Activated naive CD4-positive, alpha-beta T cell treated with anti-CD3 and anti-CD28 coated beads for 36 hours (primary cell): ENCODE measurements at regions of chr2 and their contacts with region 1.

Region 1: GRCh38 chr2:159185401-159186130 is 100.9 kb downstream of the WDSUB1 start:
- DNase-seq: peak; percentile 38
- H3K4me3 Mint-ChIP-seq: no peak overlapping the region
- H3K27ac Mint-ChIP-seq: no peak overlapping the region
- H3K4me1 Mint-ChIP-seq: no peaks in the 10 kb centered on the region
- H3K27me3 Mint-ChIP-seq: no peaks in the 10 kb centered on the region

Region 2: GRCh38 chr2:159035790-159036411 is 149.7 kb before region 1 on chr2:
- CTCF ChIA-PET with region 1: no interaction called
- intact Hi-C with region 1: loop called (anchors 1 kb)
- DNase-seq: peak; percentile 47
- H3K4me3 Mint-ChIP-seq: no peak overlapping the region
- H3K27ac Mint-ChIP-seq: no peak overlapping the region
- H3K4me1 Mint-ChIP-seq: no peaks in the 10 kb centered on the region
- H3K27me3 Mint-ChIP-seq: no peaks in the 10 kb centered on the region

Region 3: GRCh38 chr2:159124441-159124911 is 61.1 kb before region 1 on chr2:
- CTCF ChIA-PET with region 1: interaction called, 4 read pairs
- intact Hi-C with region 1: loop called (anchors 2 kb)
- DNase-seq: peak; percentile 60
- H3K4me3 Mint-ChIP-seq: no peak overlapping the region
- H3K27ac Mint-ChIP-seq: peak overlapping the region; percentile 82
- H3K4me1 Mint-ChIP-seq: peaks cover 20% of the 10 kb centered on the region
- H3K27me3 Mint-ChIP-seq: no peaks in the 10 kb centered on the region